CD8-positive, alpha-beta T cell (primary cell): ENCODE measurements at regions of chr16 and their contacts with region 1.

Region 1: DNA sequence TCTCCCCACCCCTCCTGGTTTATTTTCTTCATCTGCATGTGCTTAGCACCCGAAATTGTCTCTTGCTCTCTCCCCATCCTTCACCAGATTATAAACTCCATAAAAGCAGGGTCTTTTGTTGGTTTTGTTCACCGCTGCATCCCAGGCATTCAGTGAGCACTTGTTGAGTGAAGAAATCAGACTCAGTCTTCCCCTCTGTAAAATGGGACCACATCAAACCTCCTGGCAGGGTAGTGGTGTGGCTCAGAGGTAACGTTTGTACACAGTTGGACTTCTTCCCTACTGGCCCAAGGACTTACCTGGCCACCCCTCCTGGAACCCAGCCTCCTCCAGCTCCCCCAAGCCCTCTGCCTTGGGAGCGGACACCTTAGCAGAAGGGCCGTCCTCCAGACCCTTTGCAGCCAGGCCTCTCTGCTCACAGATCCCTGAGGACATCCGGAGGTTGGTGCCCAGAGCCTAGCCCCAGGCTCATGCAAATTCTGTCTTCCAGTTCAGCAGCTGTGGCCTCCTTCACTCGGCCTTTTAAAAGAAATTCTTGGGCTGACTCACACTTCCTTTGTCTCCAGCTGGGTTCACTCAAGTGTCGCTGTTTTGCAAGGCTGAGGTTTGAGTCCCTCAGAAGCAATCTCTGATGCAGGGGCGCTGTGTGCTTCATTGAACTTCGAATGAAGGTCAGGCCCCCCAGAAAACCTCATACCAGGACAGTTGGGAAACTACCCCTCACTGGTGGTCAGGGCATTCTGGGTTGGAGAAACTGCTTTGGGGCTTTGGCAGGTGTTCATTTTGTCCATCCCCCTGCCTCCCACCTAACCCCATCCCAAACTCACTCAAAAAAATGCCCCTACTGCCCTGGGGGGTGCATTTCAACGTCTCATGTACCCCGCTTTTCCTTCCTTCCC is 16.8 kb upstream of the RMI2 start:
- DNase-seq: peak; percentile 12 to 71 (median 54)
- ATAC-seq: peak; percentile 83
- H3K4me3 ChIP-seq: no peak overlapping the region
- H3K4me3 Mint-ChIP-seq: peak overlapping the region; percentile 63
- H3K27ac ChIP-seq: no peak overlapping the region
- H3K27ac Mint-ChIP-seq: peak overlapping the region; percentile 66
- H3K4me1 ChIP-seq: peaks cover 17% of the 10 kb centered on the region
- H3K4me1 Mint-ChIP-seq: peaks cover 26% of the 10 kb centered on the region
- H3K27me3 ChIP-seq: no peaks in the 10 kb centered on the region
- H3K27me3 Mint-ChIP-seq: no peaks in the 10 kb centered on the region
- CTCF ChIP-seq: no peak

Region 2: GRCh38 chr16:11345040-11345862 is 16.8 kb after region 1 on chr16 and contains the start of gene RMI2:
- CTCF ChIA-PET with region 1: no interaction called
- POLR2A ChIA-PET with region 1: no interaction called
- intact Hi-C with region 1: loop called in 1 of 2 experiments (anchors 2 kb)
- DNase-seq: peak; percentile 90 to 97 (median 95)
- ATAC-seq: peak; percentile 100
- H3K4me3 ChIP-seq: peak within 1 kb of the TSS; percentile 54 to 60
- H3K4me3 Mint-ChIP-seq: peak within 1 kb of the TSS; percentile 84
- H3K27ac ChIP-seq: no peak within 1 kb of the TSS
- H3K27ac Mint-ChIP-seq: peak within 1 kb of the TSS; percentile 83
- H3K4me1 ChIP-seq: no peaks in the 10 kb centered on the region
- H3K4me1 Mint-ChIP-seq: peaks cover 8% of the 10 kb centered on the region
- H3K27me3 ChIP-seq: no peaks in the 10 kb centered on the region
- H3K27me3 Mint-ChIP-seq: no peaks in the 10 kb centered on the region
- CTCF ChIP-seq: no peak
- total RNA-seq, gene RMI2: 0.69 to 0.73 TPM

Region 3: GRCh38 chr16:11361701-11362451 is 33.5 kb after region 1 on chr16:
- CTCF ChIA-PET with region 1: interaction called, 12 read pairs
- POLR2A ChIA-PET with region 1: no interaction called
- intact Hi-C with region 1: loop called in 1 of 2 experiments (anchors 5 kb)
- DNase-seq: peak in 7 of 9 experiments; percentile 15 to 61 (median 32)
- ATAC-seq: peak; percentile 67
- H3K4me3 ChIP-seq: peak overlapping the region; percentile 16 to 57
- H3K4me3 Mint-ChIP-seq: peak overlapping the region; percentile 79
- H3K27ac ChIP-seq: no peak overlapping the region
- H3K27ac Mint-ChIP-seq: no peak overlapping the region
- H3K4me1 ChIP-seq: peaks cover 34% of the 10 kb centered on the region
- H3K4me1 Mint-ChIP-seq: peaks cover 37% of the 10 kb centered on the region
- H3K27me3 ChIP-seq: peaks cover 0 to 11% of the 10 kb centered on the region in 2 experiments
- H3K27me3 Mint-ChIP-seq: no peaks in the 10 kb centered on the region
- CTCF ChIP-seq: no peak

Region 4: GRCh38 chr16:13269905-13270528 is 1941.6 kb after region 1 on chr16:
- CTCF ChIA-PET with region 1: no interaction called
- POLR2A ChIA-PET with region 1: no interaction called
- intact Hi-C with region 1: no loop called
- DNase-seq: no peak
- ATAC-seq: no peak
- H3K4me3 ChIP-seq: no peak overlapping the region
- H3K4me3 Mint-ChIP-seq: no peak overlapping the region
- H3K27ac ChIP-seq: no peak overlapping the region
- H3K27ac Mint-ChIP-seq: no peak overlapping the region
- H3K4me1 ChIP-seq: no peaks in the 10 kb centered on the region
- H3K4me1 Mint-ChIP-seq: no peaks in the 10 kb centered on the region
- H3K27me3 ChIP-seq: no peaks in the 10 kb centered on the region
- H3K27me3 Mint-ChIP-seq: peaks cover 4% of the 10 kb centered on the region
- CTCF ChIP-seq: no peak